Aorta (tissue), 5 donors: ENCODE measurements at regions of chr1 and their contacts with region 1.

Region 1: GRCh38 chr1:109816175-109816811 is 52.6 kb upstream of the EPS8L3 start:
- DNase-seq: peak in 1 of 2 donors; percentile 74
- ATAC-seq: peak; percentile 75
- H3K4me3 ChIP-seq: no peak overlapping the region
- H3K27ac ChIP-seq: peak overlapping the region in 1 of 2 donors; percentile 88
- H3K4me1 ChIP-seq: peaks cover 0 to 4% of the 10 kb centered on the region in 2 donors
- H3K27me3 ChIP-seq: no peaks in the 10 kb centered on the region

Region 2: DNA sequence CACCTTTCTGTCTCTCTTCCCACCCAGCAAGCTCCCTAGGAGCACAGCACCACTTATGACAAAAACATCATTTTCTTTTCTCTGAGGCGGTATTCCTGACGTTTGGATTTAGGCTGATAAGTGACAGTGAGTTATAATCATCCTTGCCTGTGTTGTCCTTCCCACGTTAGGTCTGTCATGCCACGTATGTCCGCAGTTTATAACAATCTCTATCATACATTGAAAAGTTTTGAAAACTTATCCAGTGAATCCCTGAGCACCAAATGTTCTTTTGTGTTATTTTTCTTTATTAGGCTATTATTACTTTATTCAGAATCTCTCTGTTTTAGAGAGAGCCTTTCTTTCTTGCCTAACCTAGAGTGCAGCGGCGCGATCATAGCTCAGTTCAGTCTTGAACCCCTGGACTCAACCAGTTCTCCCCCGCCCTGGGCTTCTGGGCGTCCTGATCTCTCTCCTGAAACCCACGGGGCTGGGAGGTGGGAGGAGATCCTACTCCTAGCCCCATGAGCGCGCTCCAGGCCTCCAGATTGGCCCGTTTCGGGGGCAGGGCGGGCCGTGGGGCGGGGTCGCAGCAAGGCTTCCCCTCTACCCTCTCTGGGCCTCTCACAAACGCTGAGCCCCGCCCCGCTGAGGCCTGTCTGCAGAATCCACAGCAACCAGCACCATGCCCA is 148.7 kb before region 1 on chr1 and contains the start of gene GSTM2:
- intact Hi-C with region 1: no loop called
- DNase-seq: peak; percentile 96 to 97
- ATAC-seq: peak; percentile 98
- H3K4me3 ChIP-seq: peak within 1 kb of the TSS; percentile 38 to 69
- H3K27ac ChIP-seq: no peak within 1 kb of the TSS
- H3K4me1 ChIP-seq: no peaks in the 10 kb centered on the region
- H3K27me3 ChIP-seq: no peaks in the 10 kb centered on the region
- total RNA-seq, gene GSTM2: 48.3 to 136 TPM

Region 3: GRCh38 chr1:109783429-109783831 is 32.9 kb before region 1 on chr1:
- intact Hi-C with region 1: loop called (anchors 5 kb)
- DNase-seq: peak; percentile 81 to 86
- ATAC-seq: peak; percentile 70
- H3K4me3 ChIP-seq: no peak overlapping the region
- H3K27ac ChIP-seq: peak overlapping the region in 1 of 2 donors; percentile 60
- H3K4me1 ChIP-seq: peaks cover 0 to 4% of the 10 kb centered on the region in 2 donors
- H3K27me3 ChIP-seq: no peaks in the 10 kb centered on the region

Region 4: DNA sequence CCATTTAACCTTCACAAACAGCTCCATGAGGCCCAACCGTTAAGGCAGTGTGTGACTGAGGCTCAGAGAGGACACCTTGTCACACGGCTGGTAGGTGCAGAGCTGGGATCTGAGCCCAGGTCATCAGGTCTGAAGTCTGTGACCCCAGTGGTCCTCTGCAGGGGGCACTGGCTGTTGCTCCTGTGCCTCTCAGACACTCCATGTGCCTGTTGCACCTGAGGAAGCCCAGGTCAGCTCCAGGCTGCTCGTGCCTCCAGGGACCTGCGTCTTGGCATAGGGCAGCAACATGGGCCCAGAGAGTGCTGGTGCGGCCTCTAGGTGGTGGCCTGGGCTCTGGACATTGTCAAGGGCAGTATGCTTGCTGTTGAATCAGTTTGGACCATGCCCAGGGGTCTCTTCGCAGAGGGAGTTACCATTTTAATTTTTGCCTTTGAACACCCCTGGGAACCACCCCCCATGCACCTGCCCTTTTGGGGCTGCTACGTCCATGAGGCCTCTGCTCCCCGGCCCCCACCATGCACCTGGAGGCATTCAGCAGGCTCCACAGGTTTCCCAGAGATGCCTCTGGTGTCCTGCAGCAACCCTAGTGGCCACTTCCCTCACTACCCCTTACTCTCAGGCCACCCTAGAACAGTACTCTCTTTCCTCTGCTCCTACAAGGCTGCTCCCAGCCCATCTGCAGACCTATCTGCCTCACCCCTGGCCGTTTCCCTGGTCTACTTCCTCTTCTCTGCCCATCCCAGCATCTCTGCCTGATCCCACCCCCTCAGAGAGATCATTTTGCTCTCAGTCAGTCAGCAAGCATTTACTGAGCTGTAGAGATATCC is 27.4 kb before region 1 on chr1:
- intact Hi-C with region 1: loop called (anchors 5 kb)
- DNase-seq: peak in 1 of 2 donors; percentile 72
- ATAC-seq: no peak
- H3K4me3 ChIP-seq: no peak overlapping the region
- H3K27ac ChIP-seq: no peak overlapping the region
- H3K4me1 ChIP-seq: peaks cover 0 to 4% of the 10 kb centered on the region in 2 donors
- H3K27me3 ChIP-seq: no peaks in the 10 kb centered on the region

Region 5: GRCh38 chr1:109850194-109850593 is 33.9 kb after region 1 on chr1:
- intact Hi-C with region 1: no loop called
- DNase-seq: no peak
- ATAC-seq: no peak
- H3K4me3 ChIP-seq: no peak overlapping the region
- H3K27ac ChIP-seq: no peak overlapping the region
- H3K4me1 ChIP-seq: no peaks in the 10 kb centered on the region
- H3K27me3 ChIP-seq: no peaks in the 10 kb centered on the region

Region 6: DNA sequence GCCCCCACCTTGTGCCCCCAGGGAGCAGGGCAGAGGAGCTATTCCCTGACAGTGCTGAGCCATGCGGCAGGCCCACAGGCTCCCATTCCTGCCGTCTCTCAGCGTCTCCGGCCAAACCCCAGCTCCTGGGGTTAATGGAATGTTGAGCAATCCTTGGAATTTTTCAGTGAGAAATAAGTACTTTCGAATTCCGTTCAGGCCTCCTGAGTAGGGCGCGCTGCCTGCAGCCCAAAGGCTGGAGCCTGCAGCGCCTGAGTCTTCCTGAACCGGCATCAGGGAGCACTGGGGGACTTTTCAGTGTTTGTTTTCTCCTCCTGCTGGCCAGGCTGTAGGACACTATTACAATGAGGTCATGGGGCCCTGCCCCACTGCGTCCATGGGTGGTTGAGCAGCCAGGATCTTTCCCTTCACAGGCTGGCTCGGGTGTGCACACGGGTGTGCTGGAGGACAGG is 61.1 kb after region 1 on chr1:
- intact Hi-C with region 1: loop called (anchors 5 kb)
- DNase-seq: peak; percentile 86 to 87
- ATAC-seq: peak; percentile 91
- H3K4me3 ChIP-seq: no peak overlapping the region
- H3K27ac ChIP-seq: peak overlapping the region; percentile 53 to 95
- H3K4me1 ChIP-seq: peaks cover 0 to 4% of the 10 kb centered on the region in 2 donors
- H3K27me3 ChIP-seq: no peaks in the 10 kb centered on the region